ENCODE measurements at regions of chr14 and their contacts with region 1.

Region 1: GRCh38 chr14:89658977-89659670 is 242.1 kb upstream of the FOXN3 start:
- DNase-seq: no peak
- ATAC-seq: no peak

Region 2: DNA sequence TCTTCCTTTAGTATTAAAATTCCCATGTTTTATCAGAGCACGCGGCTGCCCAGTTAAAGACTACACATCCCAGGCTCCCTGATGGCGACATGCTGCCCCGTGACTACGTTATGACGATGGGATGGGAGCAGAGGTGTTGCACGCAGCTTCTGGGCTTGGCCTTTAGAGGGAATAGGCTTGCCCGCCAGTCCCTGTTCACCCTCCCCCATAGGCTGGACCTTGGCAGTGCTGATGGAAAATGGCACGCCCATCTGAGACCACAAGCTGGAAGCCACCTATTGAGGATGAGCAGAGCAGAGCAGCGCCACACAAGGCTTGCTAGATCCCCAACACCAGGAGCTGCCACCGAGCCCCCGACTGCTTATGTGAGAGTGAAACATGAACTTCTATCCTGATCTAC is 1132.4 kb after region 1 on chr14:
- intact Hi-C with region 1: loop called (anchors 5 kb)
- DNase-seq: no peak
- ATAC-seq: peak; percentile 71

Measured in sciatic nerve (tissue), 2 donors.